ENCODE measurements at regions of chr5 and their contacts with region 1.

Region 1: GRCh38 chr5:181191529-181192394 is 13.2 kb downstream of the TRIM7 start:
- DNase-seq: peak; percentile 95
- ATAC-seq: peak; percentile 68
- H3K4me3 Mint-ChIP-seq: peak overlapping the region; percentile 92
- H3K27ac Mint-ChIP-seq: peak overlapping the region; percentile 90
- H3K4me1 Mint-ChIP-seq: peaks cover 40% of the 10 kb centered on the region
- H3K27me3 Mint-ChIP-seq: no peaks in the 10 kb centered on the region

Region 2: DNA sequence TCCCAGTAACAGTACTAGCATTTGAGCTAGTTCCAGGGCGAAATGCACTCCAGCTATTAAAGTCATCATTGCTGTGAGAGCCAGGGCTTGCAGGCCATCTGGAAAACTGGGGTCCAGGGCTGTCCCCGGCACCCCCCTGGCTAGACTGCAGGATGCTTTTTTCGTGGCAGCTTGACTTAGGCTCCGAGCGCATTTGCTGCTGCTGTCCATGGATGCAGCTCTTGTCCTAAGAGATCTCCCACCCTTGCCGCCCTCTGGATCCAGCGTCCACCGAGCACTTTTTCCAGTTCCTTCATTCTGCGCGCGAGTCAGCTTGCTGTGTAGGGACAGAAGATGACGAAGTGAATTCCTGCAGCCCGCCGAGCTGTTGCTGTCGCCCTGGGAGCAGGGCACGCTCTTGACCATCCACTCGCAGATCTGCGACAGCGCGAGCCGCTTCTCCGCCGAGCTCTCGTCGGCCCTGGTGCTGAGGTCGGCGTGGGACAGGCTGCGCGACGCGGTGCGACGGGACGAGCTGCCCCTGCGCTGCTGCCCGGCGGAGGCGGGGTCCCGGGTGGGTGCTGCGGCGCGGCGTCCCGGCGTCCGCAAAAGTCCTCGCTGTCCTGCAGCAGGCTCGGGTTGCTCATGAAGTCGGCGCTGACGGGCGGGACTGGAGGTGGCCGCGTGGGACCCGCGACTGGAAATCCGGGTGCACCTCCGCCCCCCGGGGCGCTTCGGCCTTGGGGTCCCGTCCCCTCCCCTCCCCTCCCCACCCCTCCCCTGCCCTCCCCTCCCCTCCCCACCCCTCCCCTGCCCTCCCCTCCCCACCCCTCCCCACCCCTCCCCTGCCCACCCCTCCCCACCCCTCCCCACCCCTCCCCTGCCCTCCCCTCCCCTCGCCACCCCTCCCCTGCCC is 91.4 kb before region 1 on chr5:
- CTCF ChIA-PET with region 1: no interaction called
- POLR2A ChIA-PET with region 1: no interaction called
- DNase-seq: no peak
- ATAC-seq: no peak
- H3K4me3 Mint-ChIP-seq: peak overlapping the region; percentile 18
- H3K27ac Mint-ChIP-seq: peak overlapping the region; percentile 40
- H3K4me1 Mint-ChIP-seq: peaks cover 10% of the 10 kb centered on the region
- H3K27me3 Mint-ChIP-seq: peaks cover 31% of the 10 kb centered on the region

Region 3: GRCh38 chr5:181114844-181115778 is 76.7 kb before region 1 on chr5:
- CTCF ChIA-PET with region 1: no interaction called
- POLR2A ChIA-PET with region 1: no interaction called
- DNase-seq: peak; percentile 19
- ATAC-seq: no peak
- H3K4me3 Mint-ChIP-seq: no peak overlapping the region
- H3K27ac Mint-ChIP-seq: no peak overlapping the region
- H3K4me1 Mint-ChIP-seq: peaks cover 2% of the 10 kb centered on the region
- H3K27me3 Mint-ChIP-seq: peaks cover 48% of the 10 kb centered on the region

Region 4: GRCh38 chr5:181167814-181168488 is 23.8 kb before region 1 on chr5:
- CTCF ChIA-PET with region 1: interaction called, 19 read pairs
- POLR2A ChIA-PET with region 1: interaction called, 13 read pairs
- DNase-seq: peak; percentile 56
- ATAC-seq: no peak
- H3K4me3 Mint-ChIP-seq: no peak overlapping the region
- H3K27ac Mint-ChIP-seq: peak overlapping the region; percentile 19
- H3K4me1 Mint-ChIP-seq: peaks cover 79% of the 10 kb centered on the region
- H3K27me3 Mint-ChIP-seq: peaks cover 39% of the 10 kb centered on the region

Region 5: DNA sequence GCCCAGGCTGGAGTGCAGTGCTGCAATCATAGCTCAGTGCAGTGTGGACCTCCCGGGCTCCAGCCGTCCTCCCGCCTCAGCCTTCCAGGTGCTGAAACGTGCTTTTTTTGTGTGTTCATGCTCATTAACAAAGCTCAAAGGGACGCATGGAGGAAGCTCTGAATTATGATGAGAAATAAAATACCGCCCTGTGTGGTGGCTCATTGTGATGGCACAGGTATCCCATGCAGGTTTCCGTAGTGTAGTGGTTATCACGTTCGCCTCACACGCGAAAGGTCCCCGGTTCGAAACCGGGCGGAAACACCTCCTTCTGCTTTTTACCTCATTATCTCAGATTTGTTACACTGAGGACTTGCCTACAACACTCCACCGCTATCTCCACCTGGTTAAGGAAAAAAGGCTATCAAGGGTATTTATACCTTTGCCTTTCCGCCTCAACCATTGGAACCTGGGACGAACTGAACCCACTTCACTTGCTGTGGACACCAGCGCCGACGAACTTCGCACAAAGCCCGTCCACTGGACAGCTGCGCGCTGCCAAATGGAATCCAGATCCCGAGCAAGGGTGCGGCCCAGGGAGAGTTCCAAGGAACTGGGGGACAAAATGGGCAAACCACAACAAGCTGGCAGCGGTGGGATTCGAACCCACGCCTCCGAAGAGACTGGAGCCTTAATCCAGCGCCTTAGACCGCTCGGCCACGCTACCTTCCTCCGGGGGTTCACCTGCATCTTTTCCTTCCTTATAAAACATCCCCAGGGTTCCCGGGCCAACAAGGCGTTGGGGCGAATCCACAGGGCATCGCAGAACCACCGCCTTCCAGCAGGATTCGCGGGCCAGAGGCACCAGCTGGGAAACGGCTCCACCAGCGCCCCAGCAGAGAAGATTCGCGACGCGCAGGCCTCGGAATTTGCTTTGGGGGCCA is 18.1 kb before region 1 on chr5:
- CTCF ChIA-PET with region 1: interaction called, 19 read pairs
- POLR2A ChIA-PET with region 1: interaction called, 13 read pairs
- DNase-seq: peak; percentile 85
- ATAC-seq: peak; percentile 79
- H3K4me3 Mint-ChIP-seq: peak overlapping the region; percentile 81
- H3K27ac Mint-ChIP-seq: peak overlapping the region; percentile 96
- H3K4me1 Mint-ChIP-seq: peaks cover 47% of the 10 kb centered on the region
- H3K27me3 Mint-ChIP-seq: peaks cover 28% of the 10 kb centered on the region

Region 6: DNA sequence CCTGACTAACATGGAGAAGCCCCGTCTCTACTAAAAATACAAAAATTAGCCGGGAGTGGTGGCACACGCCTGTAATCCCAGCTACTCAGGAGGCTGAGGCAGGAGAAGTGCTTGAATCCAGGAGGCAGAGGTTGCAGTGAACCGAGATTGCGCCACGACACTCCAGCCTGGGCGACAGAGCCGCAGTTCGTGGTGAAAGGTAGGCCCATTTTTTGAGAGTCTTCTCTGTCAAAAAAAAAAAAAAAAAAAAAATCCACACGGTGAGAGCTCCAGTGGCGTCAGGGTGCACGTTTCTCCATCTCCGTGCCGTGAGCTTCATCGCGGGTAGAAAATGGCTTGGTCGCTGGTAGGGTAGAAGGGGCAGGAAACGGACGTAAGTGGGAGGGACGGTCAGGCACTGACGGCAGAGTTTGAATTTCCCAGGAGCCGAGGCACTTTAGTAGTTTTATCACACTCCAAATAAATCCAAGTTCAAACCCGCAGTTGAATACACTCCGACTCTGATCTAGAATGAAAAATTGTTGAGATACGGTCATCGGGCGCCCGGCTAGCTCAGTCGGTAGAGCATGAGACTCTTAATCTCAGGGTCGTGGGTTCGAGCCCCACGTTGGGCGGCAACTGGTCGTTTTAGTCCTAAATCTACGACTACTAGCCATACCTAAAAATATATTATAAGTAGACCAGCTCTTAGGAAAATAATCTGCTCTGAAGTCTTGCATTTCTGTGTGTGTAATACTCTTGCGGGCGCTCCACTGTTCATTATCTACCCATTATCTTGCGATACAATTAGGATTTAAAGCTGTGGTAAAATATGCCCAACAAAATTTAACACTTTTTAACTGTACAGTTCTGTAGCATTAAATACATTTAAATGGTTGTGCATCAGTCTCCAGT is 15.7 kb after region 1 on chr5:
- CTCF ChIA-PET with region 1: interaction called, 78 read pairs
- POLR2A ChIA-PET with region 1: interaction called, 40 read pairs
- DNase-seq: peak; percentile 89
- ATAC-seq: peak; percentile 68
- H3K4me3 Mint-ChIP-seq: peak overlapping the region; percentile 78
- H3K27ac Mint-ChIP-seq: peak overlapping the region; percentile 86
- H3K4me1 Mint-ChIP-seq: peaks cover 40% of the 10 kb centered on the region
- H3K27me3 Mint-ChIP-seq: peaks cover 23% of the 10 kb centered on the region

Region 7: DNA sequence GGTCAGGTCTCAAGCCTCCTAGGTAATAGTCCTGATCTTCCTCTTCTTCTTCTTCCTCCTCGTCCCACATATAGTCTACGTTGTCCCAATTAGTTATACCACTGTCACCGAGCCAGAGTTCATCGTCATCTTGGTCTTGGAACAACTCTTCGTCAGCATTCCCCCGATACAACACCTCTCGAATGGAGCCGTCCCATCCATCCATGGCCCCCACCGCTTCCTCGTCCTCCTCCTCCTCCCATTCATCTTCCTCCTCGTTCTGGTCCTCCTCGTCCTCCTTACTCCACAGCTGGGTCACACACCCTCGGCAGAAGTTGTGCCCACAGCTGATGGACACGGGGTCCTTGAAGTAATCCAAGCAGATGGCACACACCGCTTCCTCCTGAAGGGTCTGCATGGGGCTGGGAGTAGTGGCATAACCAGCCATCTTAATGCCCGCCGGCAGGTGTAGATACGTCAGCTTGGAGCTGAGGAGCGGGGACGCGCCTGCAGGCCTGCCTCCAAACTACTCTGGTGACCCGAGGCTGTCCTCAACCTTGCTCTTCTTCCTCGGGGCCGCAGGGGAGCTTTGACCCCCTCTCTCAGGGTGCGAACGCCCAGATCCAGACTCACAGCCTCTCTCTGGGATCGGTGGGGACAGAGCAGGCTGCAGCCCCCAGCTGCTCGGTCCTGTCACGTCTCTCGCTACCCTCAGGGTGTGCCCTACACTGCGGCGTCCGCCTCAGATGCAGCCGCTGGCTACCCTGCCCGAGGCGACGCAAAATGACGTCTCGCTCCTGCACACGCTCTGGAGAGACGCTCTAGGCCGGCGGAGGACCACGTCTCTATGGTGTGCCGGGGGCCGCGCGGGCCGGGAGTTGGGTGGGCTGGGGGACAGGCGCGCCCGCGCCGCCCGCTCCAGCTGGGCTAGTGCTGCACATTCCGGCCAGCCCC is 68.9 kb after region 1 on chr5 and contains the start of gene TRIM52:
- CTCF ChIA-PET with region 1: interaction called, 5 read pairs
- POLR2A ChIA-PET with region 1: interaction called, 34 read pairs
- DNase-seq: peak; percentile 94
- ATAC-seq: peak; percentile 87
- H3K4me3 Mint-ChIP-seq: peak within 1 kb of the TSS; percentile 93
- H3K27ac Mint-ChIP-seq: peak within 1 kb of the TSS; percentile 96
- H3K4me1 Mint-ChIP-seq: peaks cover 35% of the 10 kb centered on the region
- H3K27me3 Mint-ChIP-seq: no peaks in the 10 kb centered on the region
- total RNA-seq, gene TRIM52: 22.4 to 23.2 TPM